Caco-2 (cell line): ENCODE measurements at regions of chr2 and their contacts with region 1.

Region 1: DNA sequence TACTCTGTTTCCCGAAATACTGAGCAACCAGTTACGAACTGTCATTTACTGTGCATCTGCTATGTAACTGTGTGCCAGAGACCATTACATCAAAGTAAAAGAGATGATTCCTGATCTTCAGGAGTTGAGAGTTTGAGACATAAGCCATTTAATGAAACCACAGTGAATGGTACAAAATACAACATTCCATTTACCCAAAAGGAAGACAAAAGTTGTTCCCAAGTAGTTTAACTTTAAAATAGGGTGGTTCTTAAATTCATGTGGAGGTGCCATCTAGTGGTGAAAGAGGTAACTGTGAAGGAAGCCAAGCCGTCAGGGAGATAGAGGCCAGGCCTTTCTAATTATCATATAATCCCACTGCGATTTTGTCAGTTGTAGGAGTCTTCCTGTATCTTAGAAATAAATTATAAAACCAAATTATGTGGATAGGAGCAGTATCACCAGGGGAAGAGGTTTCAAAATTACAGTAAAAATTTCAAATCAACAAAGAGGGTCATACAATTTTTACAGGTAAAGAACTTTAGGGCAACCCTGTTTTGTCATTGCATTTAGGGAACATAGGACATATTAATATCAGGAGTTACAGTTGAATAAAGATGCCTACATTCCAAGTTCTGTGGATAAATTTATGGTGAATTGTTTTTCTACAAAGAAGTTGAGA is 67.7 kb downstream of the EPAS1 start:
- DNase-seq: peak in 1 of 2 experiments; percentile 68
- H3K4me3 ChIP-seq: no peak overlapping the region
- H3K4me3 Mint-ChIP-seq: no peak overlapping the region
- H3K27ac Mint-ChIP-seq: no peak overlapping the region
- H3K4me1 ChIP-seq: no peaks in the 10 kb centered on the region
- H3K4me1 Mint-ChIP-seq: no peaks in the 10 kb centered on the region
- H3K27me3 ChIP-seq: no peaks in the 10 kb centered on the region
- H3K27me3 Mint-ChIP-seq: no peaks in the 10 kb centered on the region
- CTCF ChIP-seq: peak; percentile 67 to 75

Region 2: GRCh38 chr2:46010925-46011490 is 353.9 kb before region 1 on chr2:
- CTCF ChIA-PET with region 1: interaction called, 3 read pairs
- POLR2A ChIA-PET with region 1: no interaction called
- intact Hi-C with region 1: loop called (anchors 1 kb)
- DNase-seq: no peak
- H3K4me3 ChIP-seq: no peak overlapping the region
- H3K4me3 Mint-ChIP-seq: no peak overlapping the region
- H3K27ac Mint-ChIP-seq: no peak overlapping the region
- H3K4me1 ChIP-seq: peaks cover 17% of the 10 kb centered on the region
- H3K4me1 Mint-ChIP-seq: peaks cover 16% of the 10 kb centered on the region
- H3K27me3 ChIP-seq: no peaks in the 10 kb centered on the region
- H3K27me3 Mint-ChIP-seq: no peaks in the 10 kb centered on the region
- CTCF ChIP-seq: peak; percentile 61 to 67

Region 3: DNA sequence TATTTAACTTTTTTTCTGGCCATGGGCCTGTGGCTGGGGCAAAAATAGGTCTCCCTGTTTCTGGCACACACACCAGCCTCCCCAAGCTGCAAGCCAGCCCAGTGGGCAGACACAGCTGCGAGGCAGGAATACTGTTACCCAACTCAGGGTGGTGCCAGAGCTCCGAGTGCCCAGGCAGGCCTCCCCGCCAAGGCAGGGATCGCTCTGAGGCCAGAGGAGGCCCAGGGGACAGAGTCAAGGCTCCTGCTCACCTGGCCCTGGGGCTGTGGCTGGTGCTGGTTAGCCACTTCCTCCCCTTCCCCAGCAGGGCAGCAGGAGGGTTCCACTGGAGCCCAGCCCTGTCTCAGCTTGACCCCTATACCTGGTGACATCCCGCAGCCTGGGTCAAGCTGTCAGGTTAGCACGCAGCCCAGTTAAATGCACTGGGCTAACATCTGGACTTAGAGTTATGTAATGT is 134.8 kb before region 1 on chr2:
- CTCF ChIA-PET with region 1: no interaction called
- POLR2A ChIA-PET with region 1: no interaction called
- intact Hi-C with region 1: loop called (anchors 10 kb)
- DNase-seq: no peak
- H3K4me3 ChIP-seq: no peak overlapping the region
- H3K4me3 Mint-ChIP-seq: no peak overlapping the region
- H3K27ac Mint-ChIP-seq: peak overlapping the region; percentile 32
- H3K4me1 ChIP-seq: peaks cover 3% of the 10 kb centered on the region
- H3K4me1 Mint-ChIP-seq: peaks cover 16% of the 10 kb centered on the region
- H3K27me3 ChIP-seq: no peaks in the 10 kb centered on the region
- H3K27me3 Mint-ChIP-seq: peaks cover 3% of the 10 kb centered on the region
- CTCF ChIP-seq: no peak

Region 4: GRCh38 chr2:46335391-46336282 is 29.3 kb before region 1 on chr2:
- CTCF ChIA-PET with region 1: no interaction called
- POLR2A ChIA-PET with region 1: no interaction called
- intact Hi-C with region 1: loop called (anchors 2 kb)
- DNase-seq: peak; percentile 67 to 75
- H3K4me3 ChIP-seq: peak overlapping the region; percentile 34
- H3K4me3 Mint-ChIP-seq: peak overlapping the region; percentile 83
- H3K27ac Mint-ChIP-seq: peak overlapping the region; percentile 77
- H3K4me1 ChIP-seq: peaks cover 52% of the 10 kb centered on the region
- H3K4me1 Mint-ChIP-seq: peaks cover 66% of the 10 kb centered on the region
- H3K27me3 ChIP-seq: no peaks in the 10 kb centered on the region
- H3K27me3 Mint-ChIP-seq: no peaks in the 10 kb centered on the region
- CTCF ChIP-seq: no peak

Region 5: DNA sequence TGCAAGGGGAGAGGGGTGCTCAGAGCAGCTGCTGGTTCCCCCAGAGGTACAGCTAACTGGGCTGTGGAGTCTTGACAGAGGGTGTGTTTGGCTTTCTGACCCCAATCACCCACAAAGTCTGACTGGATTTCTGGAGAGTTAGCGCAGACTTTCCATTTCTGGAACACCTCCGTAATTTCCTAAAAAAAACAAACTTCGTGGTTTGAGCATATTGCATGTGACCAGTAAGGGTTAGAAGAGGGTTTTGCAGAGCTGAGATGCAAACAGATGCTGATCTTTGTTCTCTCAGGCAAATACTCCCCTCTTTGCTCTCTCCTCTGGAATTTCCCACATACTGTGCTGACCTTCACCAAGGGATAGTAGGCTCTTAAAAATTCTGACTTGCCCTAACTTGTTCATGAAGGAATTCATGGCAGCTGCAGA is 69.9 kb after region 1 on chr2:
- CTCF ChIA-PET with region 1: no interaction called
- POLR2A ChIA-PET with region 1: no interaction called
- intact Hi-C with region 1: no loop called
- DNase-seq: no peak
- H3K4me3 ChIP-seq: no peak overlapping the region
- H3K4me3 Mint-ChIP-seq: no peak overlapping the region
- H3K27ac Mint-ChIP-seq: peak overlapping the region; percentile 22
- H3K4me1 ChIP-seq: peaks cover 23% of the 10 kb centered on the region
- H3K4me1 Mint-ChIP-seq: peaks cover 25% of the 10 kb centered on the region
- H3K27me3 ChIP-seq: no peaks in the 10 kb centered on the region
- H3K27me3 Mint-ChIP-seq: peaks cover 2% of the 10 kb centered on the region
- CTCF ChIP-seq: no peak